ENCODE measurements at regions of chr14 and their contacts with region 1.

Region 1: DNA sequence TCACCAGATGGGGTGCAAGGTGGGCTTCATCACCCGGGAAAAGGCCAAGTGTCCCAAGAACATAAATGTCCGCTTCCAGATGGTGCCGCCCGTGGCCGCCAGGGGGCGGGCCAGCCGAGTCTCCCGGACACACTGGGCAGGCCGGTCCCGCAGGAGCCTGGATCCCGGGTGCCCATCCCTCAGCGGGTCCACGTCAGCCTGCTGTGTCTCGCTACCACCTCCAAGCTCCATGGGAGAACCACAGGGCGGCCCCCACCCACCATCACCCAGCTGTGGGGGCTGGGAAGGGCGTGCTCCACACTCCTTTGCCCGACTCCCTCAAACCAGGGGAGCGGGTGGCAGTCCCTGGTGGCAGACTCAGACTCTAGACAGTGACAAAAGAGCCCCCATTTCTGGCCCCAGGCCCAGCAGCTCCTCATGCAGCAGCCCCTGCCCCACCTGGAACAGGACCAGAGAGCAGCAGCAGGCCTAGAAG is 22.0 kb upstream of the NUDT14 start:
- DNase-seq: peak in 41 of 42 donors; percentile 65 to 92 (median 81)

Region 2: GRCh38 chr14:105255021-105255507 is 52.0 kb after region 1 on chr14:
- intact Hi-C with region 1: loop called (anchors 10 kb)
- DNase-seq: no peak

Region 3: DNA sequence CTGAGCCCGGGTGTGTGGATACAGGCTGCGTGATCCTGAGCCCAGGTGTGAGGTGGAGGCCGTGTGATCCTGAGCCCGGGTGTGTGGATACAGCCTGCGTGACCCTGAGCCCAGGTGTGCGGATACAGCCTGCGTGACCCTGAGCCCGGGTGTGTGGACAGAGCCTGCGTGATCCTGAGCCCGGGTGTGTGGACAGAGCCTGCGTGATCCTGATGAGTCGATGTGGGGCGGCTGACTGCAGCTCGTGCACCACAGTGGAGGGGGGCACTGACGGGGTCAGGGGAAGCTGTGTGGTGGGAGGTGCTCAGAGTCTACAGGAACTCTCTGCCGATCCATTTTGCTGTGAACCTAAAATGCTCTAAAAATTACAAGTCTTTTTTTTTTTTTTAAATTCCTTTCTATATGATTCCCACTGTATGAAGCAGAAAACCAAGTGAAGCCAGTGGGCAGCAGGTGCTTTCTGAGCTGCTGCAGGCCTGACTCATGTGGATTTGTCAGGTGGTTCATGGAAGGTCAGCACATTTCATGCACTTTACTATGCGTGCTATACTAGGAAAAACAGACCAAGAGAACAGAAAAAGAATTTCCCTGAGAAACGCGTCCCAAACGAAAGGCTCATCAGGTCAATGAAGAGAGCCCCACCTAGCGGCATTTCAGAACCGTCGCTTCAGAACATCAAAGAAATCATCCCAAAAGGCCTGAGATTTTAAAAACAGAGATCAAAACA is 78.4 kb after region 1 on chr14:
- intact Hi-C with region 1: loop called (anchors 5 kb)
- DNase-seq: peak in 30 of 42 donors; percentile 20 to 80 (median 60)

Region 4: GRCh38 chr14:105351920-105352851 is 149.1 kb after region 1 on chr14:
- intact Hi-C with region 1: loop called (anchors 5 kb)
- DNase-seq: peak; percentile 77 to 95 (median 88)

Region 5: GRCh38 chr14:105527661-105528581 is 324.8 kb after region 1 on chr14:
- intact Hi-C with region 1: loop called (anchors 5 kb)
- DNase-seq: peak; percentile 62 to 94 (median 88)

Measured in head of caudate nucleus (tissue), 42 donors.